ENCODE measurements at regions of chr15 and their contacts with region 1.

Region 1: GRCh38 chr15:83721031-83721430 is 67.1 kb downstream of the ADAMTSL3 start:
- DNase-seq: no peak
- ATAC-seq: no peak
- H3K4me3 ChIP-seq: no peak overlapping the region
- H3K27ac ChIP-seq: no peak overlapping the region
- H3K4me1 ChIP-seq: no peaks in the 10 kb centered on the region
- H3K27me3 ChIP-seq: no peaks in the 10 kb centered on the region
- CTCF ChIP-seq: no peak
- POLR2A ChIP-seq: no peak

Region 2: DNA sequence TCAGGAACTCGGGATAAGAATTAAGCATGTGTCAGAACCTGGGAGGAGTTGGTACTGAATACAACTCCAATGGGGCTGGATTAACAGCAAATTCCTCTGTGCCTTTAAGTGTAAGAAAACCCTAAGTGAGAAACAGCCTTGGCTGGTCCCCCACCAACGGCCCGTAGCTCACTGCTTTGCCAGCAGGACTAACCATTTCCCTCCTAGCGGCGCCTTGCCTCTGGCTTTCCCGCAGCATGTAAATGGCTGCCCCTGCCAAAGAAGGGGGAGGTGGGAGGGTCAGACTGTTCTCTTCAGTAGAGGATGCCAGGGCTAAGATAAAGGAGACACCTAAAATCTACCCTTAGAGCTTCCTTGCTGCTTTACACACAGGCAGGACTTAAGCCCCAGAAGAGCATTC is 324.9 kb before region 1 on chr15:
- in situ Hi-C with region 1: no loop called
- intact Hi-C with region 1: no loop called
- DNase-seq: no peak
- ATAC-seq: no peak
- H3K4me3 ChIP-seq: no peak overlapping the region
- H3K27ac ChIP-seq: no peak overlapping the region
- H3K4me1 ChIP-seq: no peaks in the 10 kb centered on the region
- H3K27me3 ChIP-seq: peaks cover 0 to 10% (median 6%) of the 10 kb centered on the region in 3 donors
- CTCF ChIP-seq: no peak
- POLR2A ChIP-seq: no peak

Region 3: DNA sequence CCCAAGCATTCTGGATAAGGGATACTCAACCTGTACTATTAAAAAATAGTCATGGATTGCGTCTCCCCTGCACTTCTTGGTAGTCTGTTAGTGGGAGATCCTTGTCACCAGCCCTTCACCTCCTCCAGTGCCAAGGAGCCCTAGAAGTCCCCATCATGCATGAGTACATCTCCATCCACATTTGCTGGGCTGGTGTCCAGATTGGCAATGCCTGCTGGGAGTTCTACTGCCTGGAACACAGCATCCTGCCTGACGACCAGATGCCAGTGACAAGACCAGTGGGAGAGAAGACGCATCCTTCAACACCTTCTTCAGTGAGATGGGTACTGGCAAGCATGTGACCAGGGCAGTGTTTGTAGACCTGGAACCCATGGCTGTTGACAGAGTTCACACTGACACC is 18.6 kb after region 1 on chr15:
- in situ Hi-C with region 1: no loop called
- intact Hi-C with region 1: loop called (anchors 1 kb)
- DNase-seq: no peak
- ATAC-seq: no peak
- H3K4me3 ChIP-seq: no peak overlapping the region
- H3K27ac ChIP-seq: no peak overlapping the region
- H3K4me1 ChIP-seq: no peaks in the 10 kb centered on the region
- H3K27me3 ChIP-seq: no peaks in the 10 kb centered on the region
- CTCF ChIP-seq: no peak
- POLR2A ChIP-seq: no peak